HAP-1 (cell line): ENCODE measurements at regions of chr1 and their contacts with region 1.

Region 1: DNA sequence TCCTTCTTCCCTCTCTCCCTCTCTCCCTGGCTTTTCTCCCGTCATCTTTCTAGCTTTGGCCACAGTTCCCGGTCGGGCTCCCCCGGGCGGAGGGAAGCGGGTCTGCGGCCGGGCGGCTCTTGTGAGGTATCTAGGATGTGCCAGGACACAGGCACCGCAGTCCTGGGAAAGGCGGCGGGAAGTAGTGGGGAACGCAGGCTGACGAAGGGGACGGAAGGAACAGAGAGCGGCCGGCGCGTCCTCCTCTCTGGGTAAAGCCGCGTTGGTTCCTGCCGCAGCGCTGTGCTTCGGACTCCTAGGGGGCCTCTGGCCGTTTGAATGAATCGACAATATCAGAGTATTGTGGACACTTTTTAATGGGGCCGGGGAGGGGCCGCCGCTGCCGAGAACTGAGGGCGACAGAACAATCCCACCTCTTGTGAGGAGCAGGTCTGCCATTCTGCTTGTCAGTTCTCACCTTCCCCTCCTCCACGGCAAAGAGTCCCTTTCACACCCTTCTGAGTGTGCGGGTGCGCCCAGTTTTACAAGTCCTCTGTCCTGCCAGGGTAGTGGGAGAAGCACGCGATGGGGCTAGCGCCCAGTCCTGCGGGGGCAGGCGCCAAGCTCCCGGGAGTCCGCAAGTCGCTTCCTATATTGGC is 1.2 kb upstream of the LHX9 start:
- DNase-seq: peak; percentile 82 to 93
- H3K4me3 ChIP-seq: peak overlapping the region; percentile 57
- H3K4me1 ChIP-seq: peaks cover 18% of the 10 kb centered on the region
- H3K27me3 ChIP-seq: no peaks in the 10 kb centered on the region

Region 2: DNA sequence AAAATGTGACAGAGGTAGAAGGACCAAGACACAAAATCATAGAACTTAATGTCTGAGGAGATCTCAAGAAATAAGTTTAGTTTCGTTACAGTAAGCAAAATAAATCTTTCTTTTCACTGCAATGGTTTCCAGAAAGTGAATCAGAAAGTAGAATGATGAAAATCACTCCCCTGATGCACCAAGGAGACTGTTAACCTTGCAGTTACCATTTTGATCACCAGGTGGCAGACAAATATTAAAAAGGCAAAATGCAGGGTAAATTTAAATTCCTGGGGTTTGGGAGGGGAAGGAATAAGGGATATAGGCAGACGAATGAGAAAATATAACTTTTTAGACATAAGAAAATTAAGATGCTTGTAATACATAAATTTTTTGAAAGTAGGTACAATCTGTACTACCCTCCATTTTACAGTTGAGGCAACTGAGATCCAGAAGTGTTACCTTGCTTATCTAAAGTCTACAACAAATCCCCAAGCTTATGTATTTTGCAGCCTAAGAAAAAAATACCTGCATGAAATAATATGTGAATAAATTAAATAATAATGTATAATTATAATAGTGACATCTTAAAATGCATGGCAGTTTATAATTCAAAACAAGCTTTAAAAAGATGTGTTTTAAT is 394.8 kb before region 1 on chr1:
- in situ Hi-C with region 1: loop called (anchors 10 kb)
- DNase-seq: peak; percentile 56 to 57
- H3K4me3 ChIP-seq: no peak overlapping the region
- H3K4me1 ChIP-seq: peaks cover 17% of the 10 kb centered on the region
- H3K27me3 ChIP-seq: no peaks in the 10 kb centered on the region

Region 3: DNA sequence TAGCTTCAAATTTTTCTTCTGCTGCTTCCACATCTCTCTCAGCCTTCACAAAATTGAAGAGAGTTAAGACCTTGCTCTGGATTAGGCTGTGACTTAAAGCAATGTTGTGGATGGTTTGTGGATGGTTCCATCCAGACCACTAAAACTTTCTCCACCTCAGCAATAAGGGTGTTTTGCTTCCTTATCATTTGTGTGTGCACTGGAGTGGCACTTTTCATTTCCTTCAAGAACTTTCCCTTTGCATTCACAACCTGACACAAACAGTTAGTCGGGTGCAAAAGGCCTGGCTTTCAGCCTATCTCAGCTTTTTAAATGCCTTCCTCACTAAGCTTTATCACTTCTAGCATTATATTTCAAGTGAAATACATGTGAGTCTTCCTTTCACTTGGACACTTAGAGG is 171.0 kb before region 1 on chr1:
- in situ Hi-C with region 1: no loop called
- DNase-seq: no peak
- H3K4me3 ChIP-seq: no peak overlapping the region
- H3K4me1 ChIP-seq: peaks cover 7% of the 10 kb centered on the region
- H3K27me3 ChIP-seq: no peaks in the 10 kb centered on the region